Transverse colon (tissue), 4 donors: ENCODE measurements at regions of chr7 and their contacts with region 1.

Region 1: GRCh38 chr7:140653319-140654108 is 12.9 kb upstream of the DENND2A start:
- DNase-seq: peak; percentile 67
- H3K4me3 ChIP-seq: no peak overlapping the region
- H3K27ac ChIP-seq: no peak overlapping the region
- H3K4me1 ChIP-seq: peaks cover 18 to 28% (median 19%) of the 10 kb centered on the region in 4 donors
- H3K27me3 ChIP-seq: no peaks in the 10 kb centered on the region
- CTCF ChIP-seq: peak; percentile 82 to 91 (median 89)
- EP300 ChIP-seq: no peak
- POLR2A ChIP-seq: no peak

Region 2: GRCh38 chr7:140479062-140479738 is 174.3 kb before region 1 on chr7 and contains the start of gene MKRN1:
- in situ Hi-C with region 1: no loop called
- intact Hi-C with region 1: loop called (anchors 5 kb)
- DNase-seq: peak; percentile 97
- H3K4me3 ChIP-seq: peak within 1 kb of the TSS; percentile 90 to 98 (median 94)
- H3K27ac ChIP-seq: peak within 1 kb of the TSS; percentile 96 to 98 (median 97)
- H3K4me1 ChIP-seq: peaks cover 14 to 37% (median 23%) of the 10 kb centered on the region in 4 donors
- H3K27me3 ChIP-seq: no peaks in the 10 kb centered on the region
- CTCF ChIP-seq: peak in 2 of 5 experiments; percentile 4 to 28
- EP300 ChIP-seq: no peak
- POLR2A ChIP-seq: peak; percentile 91
- total RNA-seq, gene MKRN1: 143 to 288 (median 187) TPM

Region 3: GRCh38 chr7:140517546-140518369 is 135.8 kb before region 1 on chr7:
- in situ Hi-C with region 1: loop called (anchors 5 to 10 kb)
- intact Hi-C with region 1: loop called (anchors 1 kb)
- DNase-seq: peak; percentile 94
- H3K4me3 ChIP-seq: peak overlapping the region in 1 of 4 donors; percentile 36
- H3K27ac ChIP-seq: peak overlapping the region; percentile 89 to 91 (median 90)
- H3K4me1 ChIP-seq: peaks cover 10 to 23% (median 15%) of the 10 kb centered on the region in 4 donors
- H3K27me3 ChIP-seq: no peaks in the 10 kb centered on the region
- CTCF ChIP-seq: peak; percentile 73 to 95 (median 87)
- EP300 ChIP-seq: no peak
- POLR2A ChIP-seq: peak; percentile 21